ENCODE measurements at regions of chr14 and their contacts with region 1.

Region 1: DNA sequence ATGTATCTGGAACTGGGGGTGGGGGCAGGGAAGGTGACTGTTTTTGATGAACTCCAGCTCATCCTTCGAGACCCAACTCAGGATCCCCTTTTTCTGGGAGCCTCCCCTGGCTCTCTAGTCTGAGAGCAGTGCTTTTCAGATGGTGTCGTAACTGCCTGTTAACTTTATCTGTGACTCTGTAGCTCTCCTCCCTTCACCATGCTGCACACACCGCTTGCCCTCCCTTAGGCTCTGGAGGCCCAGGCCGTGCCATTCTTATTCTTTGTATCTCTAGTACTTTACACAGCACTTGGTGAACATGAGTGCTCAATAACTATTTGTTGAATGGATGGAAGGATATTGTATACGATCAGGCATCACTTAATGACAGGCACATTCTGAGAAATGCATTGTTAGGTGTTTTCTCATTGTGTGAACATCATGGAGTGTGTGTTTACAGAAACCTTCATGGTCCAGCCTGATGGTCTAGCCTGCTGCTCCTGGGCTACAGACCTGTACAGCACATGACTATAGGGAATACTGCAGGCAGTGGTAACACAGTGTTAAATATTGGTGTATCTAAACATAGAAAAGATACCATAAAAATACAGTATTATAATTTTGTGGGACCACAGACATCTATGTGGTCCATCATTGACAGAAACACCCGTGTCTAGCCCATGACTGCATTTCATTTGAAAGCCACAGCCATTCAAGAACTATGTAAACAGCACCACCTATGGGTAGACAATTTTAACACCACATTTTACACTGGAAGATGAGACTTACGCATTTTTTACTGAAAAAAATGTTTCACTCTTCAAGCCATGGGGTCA is 91.8 kb downstream of the EML1 start:
- DNase-seq: no peak
- H3K4me3 ChIP-seq: no peak overlapping the region
- H3K27ac ChIP-seq: no peak overlapping the region
- H3K4me1 ChIP-seq: peaks cover 8 to 31% (median 24%) of the 10 kb centered on the region in 4 experiments
- H3K27me3 ChIP-seq: no peaks in the 10 kb centered on the region; a peak in 1 of 7 replicates
- CTCF ChIP-seq: peak in 2 of 3 experiments; percentile 49 to 68; a peak in 2 of 4 replicates
- EP300 ChIP-seq: no peak
- POLR2A ChIP-seq: no peak
- RAD21 ChIP-seq: peak; percentile 87 to 88

Region 2: GRCh38 chr14:99755629-99756603 is 129.1 kb before region 1 on chr14:
- CTCF ChIA-PET with region 1: interaction called, 20 read pairs
- POLR2A ChIA-PET with region 1: no interaction called
- DNase-seq: no peak
- H3K4me3 ChIP-seq: no peak overlapping the region
- H3K27ac ChIP-seq: no peak overlapping the region
- H3K4me1 ChIP-seq: peaks cover 0 to 17% (median 9%) of the 10 kb centered on the region in 4 experiments; a peak in 6 of 7 replicates
- H3K27me3 ChIP-seq: no peaks in the 10 kb centered on the region
- CTCF ChIP-seq: no peak
- EP300 ChIP-seq: no peak
- POLR2A ChIP-seq: no peak
- RAD21 ChIP-seq: no peak

Region 3: GRCh38 chr14:99853206-99853605 is 31.8 kb before region 1 on chr14:
- CTCF ChIA-PET with region 1: interaction called, 24 read pairs
- POLR2A ChIA-PET with region 1: no interaction called
- DNase-seq: no peak
- H3K4me3 ChIP-seq: no peak overlapping the region
- H3K27ac ChIP-seq: no peak overlapping the region
- H3K4me1 ChIP-seq: no peaks in the 10 kb centered on the region
- H3K27me3 ChIP-seq: no peaks in the 10 kb centered on the region
- CTCF ChIP-seq: no peak
- EP300 ChIP-seq: no peak
- POLR2A ChIP-seq: no peak
- RAD21 ChIP-seq: no peak

Region 4: DNA sequence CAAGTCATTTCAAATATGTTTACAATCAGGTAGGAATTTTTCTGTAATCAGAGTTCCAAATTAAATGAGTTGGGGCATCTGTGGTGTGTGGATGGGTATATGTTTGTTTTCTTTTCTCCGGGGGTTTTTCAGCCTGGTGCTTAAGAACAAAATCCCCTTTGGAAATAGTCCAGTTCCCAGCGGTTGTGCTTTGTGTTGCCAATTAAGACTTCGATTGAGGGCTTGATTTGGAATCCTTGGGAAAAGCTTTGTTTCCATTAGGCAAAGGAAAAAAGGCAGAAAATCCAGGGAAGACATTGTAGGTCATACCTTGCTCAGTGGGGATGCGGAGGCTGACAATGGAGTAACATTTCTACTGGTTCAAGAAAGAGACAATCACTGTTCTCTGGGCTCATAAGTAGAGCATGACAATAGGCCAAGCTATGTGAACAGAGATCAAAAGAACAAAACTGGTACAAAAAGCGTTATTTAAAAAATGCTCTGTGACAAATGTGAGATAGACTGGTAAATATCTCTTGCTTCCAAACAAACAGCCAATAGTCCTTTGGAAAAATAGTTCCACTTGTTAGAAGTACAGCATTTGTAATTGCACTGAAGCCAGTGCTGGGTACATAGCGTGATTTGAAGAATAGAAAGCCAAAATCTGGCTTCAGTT is 12.1 kb before region 1 on chr14:
- CTCF ChIA-PET with region 1: interaction called, 39 read pairs
- POLR2A ChIA-PET with region 1: no interaction called
- DNase-seq: peak; percentile 44 to 57
- H3K4me3 ChIP-seq: peak overlapping the region in 1 of 4 experiments; percentile 36; a peak in 2 of 8 replicates
- H3K27ac ChIP-seq: no peak overlapping the region
- H3K4me1 ChIP-seq: peaks cover 4 to 37% (median 23%) of the 10 kb centered on the region in 4 experiments
- H3K27me3 ChIP-seq: no peaks in the 10 kb centered on the region; a peak in 1 of 7 replicates
- CTCF ChIP-seq: no peak
- EP300 ChIP-seq: peak in 1 of 2 experiments; percentile 80; a peak in 1 of 3 replicates
- POLR2A ChIP-seq: no peak
- RAD21 ChIP-seq: no peak

Region 5: DNA sequence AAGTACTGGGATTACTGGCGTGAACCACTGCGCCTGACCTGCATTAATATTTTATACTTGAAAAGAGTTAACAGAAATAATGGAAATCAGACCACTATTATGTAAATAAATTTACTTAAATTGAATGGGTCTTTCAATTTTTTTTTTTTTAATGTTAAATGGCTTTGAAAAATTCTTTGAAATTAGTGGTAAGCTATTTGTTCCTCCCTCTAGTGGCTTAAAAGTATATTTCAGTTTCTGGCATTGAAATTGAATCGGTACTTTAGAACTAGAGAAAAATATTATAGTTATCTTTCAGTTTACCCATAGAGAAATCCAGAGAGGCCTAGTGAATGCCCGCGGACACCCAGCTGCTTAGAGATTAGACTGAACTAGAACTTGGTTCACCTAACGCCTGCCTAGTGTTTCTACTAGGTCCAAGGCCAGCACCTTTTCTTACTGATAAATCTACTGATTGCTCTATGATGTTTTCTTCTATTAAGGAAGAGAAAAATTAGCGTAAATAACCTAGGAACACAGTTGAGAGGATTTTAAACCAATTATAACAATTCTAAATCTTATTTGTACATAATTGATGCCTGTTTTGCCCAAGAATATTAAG is 14.6 kb after region 1 on chr14:
- CTCF ChIA-PET with region 1: interaction called, 81 read pairs
- POLR2A ChIA-PET with region 1: interaction called, 3 read pairs
- DNase-seq: no peak
- H3K4me3 ChIP-seq: no peak overlapping the region
- H3K27ac ChIP-seq: no peak overlapping the region
- H3K4me1 ChIP-seq: no peaks in the 10 kb centered on the region
- H3K27me3 ChIP-seq: no peaks in the 10 kb centered on the region
- CTCF ChIP-seq: peak in 1 of 3 experiments; percentile 25; a peak in 2 of 4 replicates
- EP300 ChIP-seq: no peak
- POLR2A ChIP-seq: no peak
- RAD21 ChIP-seq: no peak

Region 6: GRCh38 chr14:100004392-100004791 is 119.4 kb after region 1 on chr14:
- CTCF ChIA-PET with region 1: no interaction called
- POLR2A ChIA-PET with region 1: no interaction called
- DNase-seq: no peak
- H3K4me3 ChIP-seq: no peak overlapping the region
- H3K27ac ChIP-seq: no peak overlapping the region
- H3K4me1 ChIP-seq: no peaks in the 10 kb centered on the region; a peak in 1 of 7 replicates
- H3K27me3 ChIP-seq: no peaks in the 10 kb centered on the region
- CTCF ChIP-seq: no peak
- EP300 ChIP-seq: no peak
- POLR2A ChIP-seq: no peak
- RAD21 ChIP-seq: no peak